CD8-positive, alpha-beta T cell (primary cell): ENCODE measurements at regions of chr6 and their contacts with region 1.

Region 1: GRCh38 chr6:136643850-136644596 is 93.8 kb upstream of the MAP7 start:
- DNase-seq: peak; percentile 52 to 86 (median 80)
- ATAC-seq: peak; percentile 54
- H3K4me3 ChIP-seq: no peak overlapping the region
- H3K4me3 Mint-ChIP-seq: no peak overlapping the region
- H3K27ac ChIP-seq: peak overlapping the region in 1 of 2 experiments; percentile 6
- H3K27ac Mint-ChIP-seq: peak overlapping the region; percentile 45
- H3K4me1 ChIP-seq: peaks cover 10% of the 10 kb centered on the region
- H3K4me1 Mint-ChIP-seq: peaks cover 3% of the 10 kb centered on the region
- H3K27me3 ChIP-seq: no peaks in the 10 kb centered on the region
- H3K27me3 Mint-ChIP-seq: no peaks in the 10 kb centered on the region
- CTCF ChIP-seq: peak; percentile 96

Region 2: GRCh38 chr6:136628996-136629395 is 15.0 kb before region 1 on chr6:
- CTCF ChIA-PET with region 1: interaction called, 39 read pairs
- POLR2A ChIA-PET with region 1: no interaction called
- intact Hi-C with region 1: no loop called
- DNase-seq: no peak
- ATAC-seq: no peak
- H3K4me3 ChIP-seq: no peak overlapping the region
- H3K4me3 Mint-ChIP-seq: no peak overlapping the region
- H3K27ac ChIP-seq: no peak overlapping the region
- H3K27ac Mint-ChIP-seq: no peak overlapping the region
- H3K4me1 ChIP-seq: no peaks in the 10 kb centered on the region
- H3K4me1 Mint-ChIP-seq: no peaks in the 10 kb centered on the region
- H3K27me3 ChIP-seq: no peaks in the 10 kb centered on the region
- H3K27me3 Mint-ChIP-seq: no peaks in the 10 kb centered on the region
- CTCF ChIP-seq: no peak

Region 3: GRCh38 chr6:136669299-136669699 is 25.3 kb after region 1 on chr6:
- CTCF ChIA-PET with region 1: interaction called, 14 read pairs
- POLR2A ChIA-PET with region 1: no interaction called
- intact Hi-C with region 1: no loop called
- DNase-seq: no peak
- ATAC-seq: no peak
- H3K4me3 ChIP-seq: no peak overlapping the region
- H3K4me3 Mint-ChIP-seq: no peak overlapping the region
- H3K27ac ChIP-seq: no peak overlapping the region
- H3K27ac Mint-ChIP-seq: no peak overlapping the region
- H3K4me1 ChIP-seq: no peaks in the 10 kb centered on the region
- H3K4me1 Mint-ChIP-seq: no peaks in the 10 kb centered on the region
- H3K27me3 ChIP-seq: no peaks in the 10 kb centered on the region
- H3K27me3 Mint-ChIP-seq: no peaks in the 10 kb centered on the region
- CTCF ChIP-seq: no peak

Region 4: GRCh38 chr6:136737871-136738691 is 94.1 kb after region 1 on chr6:
- CTCF ChIA-PET with region 1: interaction called, 12 read pairs
- POLR2A ChIA-PET with region 1: no interaction called
- intact Hi-C with region 1: no loop called
- DNase-seq: no peak
- ATAC-seq: no peak
- H3K4me3 ChIP-seq: no peak overlapping the region
- H3K4me3 Mint-ChIP-seq: no peak overlapping the region
- H3K27ac ChIP-seq: no peak overlapping the region
- H3K27ac Mint-ChIP-seq: no peak overlapping the region
- H3K4me1 ChIP-seq: no peaks in the 10 kb centered on the region
- H3K4me1 Mint-ChIP-seq: peaks cover 24% of the 10 kb centered on the region
- H3K27me3 ChIP-seq: no peaks in the 10 kb centered on the region
- H3K27me3 Mint-ChIP-seq: no peaks in the 10 kb centered on the region
- CTCF ChIP-seq: no peak

Region 5: GRCh38 chr6:136801581-136801980 is 157.6 kb after region 1 on chr6:
- CTCF ChIA-PET with region 1: interaction called, 79 read pairs
- POLR2A ChIA-PET with region 1: interaction called, 5 read pairs
- intact Hi-C with region 1: no loop called
- DNase-seq: no peak
- ATAC-seq: no peak
- H3K4me3 ChIP-seq: no peak overlapping the region
- H3K4me3 Mint-ChIP-seq: no peak overlapping the region
- H3K27ac ChIP-seq: no peak overlapping the region
- H3K27ac Mint-ChIP-seq: no peak overlapping the region
- H3K4me1 ChIP-seq: no peaks in the 10 kb centered on the region
- H3K4me1 Mint-ChIP-seq: no peaks in the 10 kb centered on the region
- H3K27me3 ChIP-seq: no peaks in the 10 kb centered on the region
- H3K27me3 Mint-ChIP-seq: peaks cover 3% of the 10 kb centered on the region
- CTCF ChIP-seq: no peak

Region 6: DNA sequence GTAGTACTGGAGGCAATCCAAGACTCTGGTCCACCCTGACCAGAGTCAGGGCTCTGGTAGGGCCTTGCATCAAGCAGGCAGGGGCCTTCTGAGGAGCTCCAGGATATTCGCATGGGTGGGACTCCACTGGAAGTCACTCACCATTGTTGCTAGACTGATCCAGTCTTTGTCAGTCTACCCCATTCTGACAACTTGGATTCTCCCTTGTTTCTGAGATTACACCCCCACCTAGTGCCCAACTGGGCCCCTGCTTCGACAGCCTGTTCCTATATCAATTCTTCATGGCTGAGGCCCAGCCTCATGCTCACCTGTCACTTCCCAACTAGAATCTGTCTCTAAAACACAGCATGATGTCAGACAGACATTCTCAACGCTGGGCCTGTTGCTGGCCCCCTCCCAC is 283.3 kb after region 1 on chr6:
- CTCF ChIA-PET with region 1: interaction called, 16 read pairs
- POLR2A ChIA-PET with region 1: no interaction called
- intact Hi-C with region 1: loop called (anchors 1 to 5 kb)
- DNase-seq: peak in 3 of 9 experiments; percentile 5 to 31 (median 23)
- ATAC-seq: peak; percentile 46
- H3K4me3 ChIP-seq: no peak overlapping the region
- H3K4me3 Mint-ChIP-seq: no peak overlapping the region
- H3K27ac ChIP-seq: no peak overlapping the region
- H3K27ac Mint-ChIP-seq: no peak overlapping the region
- H3K4me1 ChIP-seq: peaks cover 9% of the 10 kb centered on the region
- H3K4me1 Mint-ChIP-seq: peaks cover 17% of the 10 kb centered on the region
- H3K27me3 ChIP-seq: peaks cover 9 to 13% of the 10 kb centered on the region in 2 experiments
- H3K27me3 Mint-ChIP-seq: peaks cover 39% of the 10 kb centered on the region
- CTCF ChIP-seq: no peak